ENCODE measurements at regions of chr18 and their contacts with region 1.

Region 1: DNA sequence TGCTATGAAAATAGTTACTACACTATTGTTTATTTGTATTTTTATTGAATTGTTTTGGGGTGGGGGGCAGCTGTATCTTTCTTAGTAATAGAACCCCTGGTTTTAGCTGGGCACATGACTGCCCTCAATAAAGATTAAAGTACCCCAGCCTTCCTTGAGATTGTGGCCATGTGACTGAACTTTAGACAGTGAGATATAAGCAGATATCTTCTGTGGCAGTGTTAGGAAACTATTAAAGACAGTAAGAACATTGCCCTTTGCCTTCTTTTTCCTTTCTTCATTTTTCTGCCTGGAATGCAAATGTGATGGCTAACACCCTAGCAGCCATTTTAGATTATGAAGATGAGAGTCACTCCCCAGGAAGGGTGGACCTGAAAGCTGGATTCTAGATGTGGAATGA is 47.9 kb upstream of the AKAIN1 start:
- DNase-seq: no peak
- H3K4me3 Mint-ChIP-seq: no peak overlapping the region
- H3K27ac Mint-ChIP-seq: no peak overlapping the region
- H3K4me1 Mint-ChIP-seq: peaks cover 27% of the 10 kb centered on the region
- H3K27me3 Mint-ChIP-seq: no peaks in the 10 kb centered on the region

Region 2: DNA sequence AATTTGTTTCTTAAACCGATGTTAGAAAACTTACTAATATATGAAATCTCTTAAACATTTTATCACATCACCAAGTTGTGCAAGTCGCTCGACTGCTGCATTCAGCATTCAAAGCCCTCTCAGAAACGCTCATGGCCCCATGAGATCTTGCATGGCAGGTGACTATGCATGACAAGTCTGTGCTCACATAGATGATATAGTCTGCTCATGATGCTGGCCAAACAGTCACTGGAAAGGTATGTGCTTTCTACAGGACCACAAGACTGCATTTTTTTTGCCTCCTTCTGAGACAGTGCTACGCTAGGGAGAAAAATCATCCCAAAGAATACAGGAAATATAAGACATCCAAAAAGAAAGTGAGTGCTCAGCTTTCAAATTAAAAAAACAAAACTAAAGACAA is 148.8 kb after region 1 on chr18:
- intact Hi-C with region 1: loop called (anchors 10 kb)
- DNase-seq: no peak
- H3K4me3 Mint-ChIP-seq: no peak overlapping the region
- H3K27ac Mint-ChIP-seq: no peak overlapping the region
- H3K4me1 Mint-ChIP-seq: peaks cover 11% of the 10 kb centered on the region
- H3K27me3 Mint-ChIP-seq: peaks cover 2% of the 10 kb centered on the region

Measured in activated T-helper 1 cell treated with anti-CD3 and anti-CD28 coated beads, Interleukin-12 subunit alpha, Interleukin-12 subunit beta, Interleukin-2, Interleukin-4 antibody, amounts not matched to agents 30 ng/mL and 10 ng/mL and 1 ng/mL, durations not matched to agents 14 hours and 24 hours and 36 hours (primary cell).